A673 (cell line): ENCODE measurements at regions of chr10 and their contacts with region 1.

Region 1: DNA sequence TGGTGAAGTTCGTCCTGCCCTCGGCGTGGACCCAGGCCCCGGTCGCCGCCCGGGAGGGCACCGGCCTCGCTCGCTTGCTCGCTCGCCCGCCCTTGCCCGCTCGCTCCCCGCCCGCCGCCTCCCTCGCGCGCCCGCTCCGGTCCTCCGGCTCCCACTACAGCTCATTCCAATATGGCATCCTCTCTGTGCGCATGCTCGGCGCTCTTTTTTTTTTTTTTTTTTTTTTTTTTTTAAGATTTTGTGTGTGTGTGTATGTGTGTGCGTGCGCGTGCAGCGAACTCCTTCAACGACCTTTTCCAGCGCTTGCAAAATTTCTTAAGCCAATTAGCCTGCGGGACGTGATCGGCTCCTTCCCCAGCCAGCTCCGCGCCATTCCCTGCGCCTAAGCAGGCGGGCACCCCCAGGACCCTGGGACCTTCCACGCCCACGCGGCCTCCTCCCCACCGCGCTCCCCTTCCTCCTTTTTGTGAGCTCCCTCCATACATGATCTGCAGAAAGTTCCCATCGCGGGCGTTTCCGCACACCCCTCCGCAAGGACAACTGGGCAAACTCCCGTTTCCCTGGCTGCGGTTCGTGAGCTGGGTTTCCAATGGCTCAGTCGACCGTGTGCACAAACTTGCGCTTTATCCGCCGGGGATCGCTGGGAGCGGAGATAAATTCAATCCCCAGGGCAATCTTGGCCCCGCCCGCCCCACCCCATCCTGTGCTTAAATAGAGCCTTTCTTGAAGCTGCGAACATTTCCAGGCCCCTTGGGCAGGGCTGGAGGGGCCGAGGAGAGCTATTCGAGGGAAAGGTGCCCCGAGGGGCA is at the start of gene SFMBT2:
- DNase-seq: peak; percentile 77
- H3K4me3 ChIP-seq: peak within 1 kb of the TSS; percentile 64
- H3K27ac ChIP-seq: peak within 1 kb of the TSS; percentile 30
- H3K4me1 ChIP-seq: peaks cover 22% of the 10 kb centered on the region
- H3K27me3 ChIP-seq: peaks cover 88% of the 10 kb centered on the region
- CTCF ChIP-seq: no peak
- total RNA-seq, gene SFMBT2: 8.2 and 11.8 TPM in 2 replicates

Region 2: GRCh38 chr10:6416892-6417512 is 994.1 kb before region 1 on chr10:
- CTCF ChIA-PET with region 1: no interaction called
- POLR2A ChIA-PET with region 1: no interaction called
- intact Hi-C with region 1: loop called (anchors 10 kb)
- DNase-seq: peak; percentile 70
- H3K4me3 ChIP-seq: no peak overlapping the region
- H3K27ac ChIP-seq: no peak overlapping the region
- H3K4me1 ChIP-seq: no peaks in the 10 kb centered on the region
- H3K27me3 ChIP-seq: peaks cover 60% of the 10 kb centered on the region
- CTCF ChIP-seq: peak; percentile 73

Region 3: GRCh38 chr10:6843481-6843881 is 567.6 kb before region 1 on chr10:
- CTCF ChIA-PET with region 1: interaction called, 5 read pairs
- POLR2A ChIA-PET with region 1: no interaction called
- intact Hi-C with region 1: loop called (anchors 10 kb)
- DNase-seq: peak; percentile 28
- H3K4me3 ChIP-seq: no peak overlapping the region
- H3K27ac ChIP-seq: no peak overlapping the region
- H3K4me1 ChIP-seq: peaks cover 8% of the 10 kb centered on the region
- H3K27me3 ChIP-seq: no peaks in the 10 kb centered on the region
- CTCF ChIP-seq: peak; percentile 53

Region 4: DNA sequence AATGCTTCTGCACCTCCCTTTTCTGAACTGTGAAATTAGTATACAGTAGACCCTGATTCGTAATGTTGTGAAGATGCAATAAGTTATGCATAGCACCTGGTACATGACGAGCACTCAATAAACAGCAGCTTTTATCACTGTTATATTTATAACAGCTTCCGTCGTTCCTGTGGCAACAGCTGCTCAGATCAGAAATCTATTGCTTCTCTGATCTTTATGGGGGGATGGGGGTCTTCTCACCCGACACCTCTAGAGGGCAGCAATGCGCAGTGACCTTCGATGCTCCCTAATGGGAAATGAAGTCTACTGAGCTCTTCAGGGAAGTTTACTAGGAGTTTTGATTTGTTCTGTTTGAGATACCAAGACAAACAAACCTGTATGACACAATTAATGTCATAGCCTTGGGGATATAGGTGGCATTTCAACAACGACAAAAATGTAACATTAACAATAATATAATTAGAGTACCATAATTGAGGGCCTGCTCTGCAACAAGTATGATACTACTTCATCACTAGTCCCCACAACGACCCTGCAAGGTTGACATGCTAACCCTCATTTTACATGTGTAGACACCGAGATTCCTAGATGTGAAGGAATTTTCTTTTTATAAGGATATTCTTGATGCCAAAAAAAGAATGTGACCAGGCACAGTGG is 289.8 kb before region 1 on chr10:
- CTCF ChIA-PET with region 1: no interaction called
- POLR2A ChIA-PET with region 1: no interaction called
- intact Hi-C with region 1: loop called (anchors 5 kb)
- DNase-seq: peak; percentile 73
- H3K4me3 ChIP-seq: no peak overlapping the region
- H3K27ac ChIP-seq: no peak overlapping the region
- H3K4me1 ChIP-seq: no peaks in the 10 kb centered on the region
- H3K27me3 ChIP-seq: peaks cover 75% of the 10 kb centered on the region
- CTCF ChIP-seq: peak; percentile 81

Region 5: DNA sequence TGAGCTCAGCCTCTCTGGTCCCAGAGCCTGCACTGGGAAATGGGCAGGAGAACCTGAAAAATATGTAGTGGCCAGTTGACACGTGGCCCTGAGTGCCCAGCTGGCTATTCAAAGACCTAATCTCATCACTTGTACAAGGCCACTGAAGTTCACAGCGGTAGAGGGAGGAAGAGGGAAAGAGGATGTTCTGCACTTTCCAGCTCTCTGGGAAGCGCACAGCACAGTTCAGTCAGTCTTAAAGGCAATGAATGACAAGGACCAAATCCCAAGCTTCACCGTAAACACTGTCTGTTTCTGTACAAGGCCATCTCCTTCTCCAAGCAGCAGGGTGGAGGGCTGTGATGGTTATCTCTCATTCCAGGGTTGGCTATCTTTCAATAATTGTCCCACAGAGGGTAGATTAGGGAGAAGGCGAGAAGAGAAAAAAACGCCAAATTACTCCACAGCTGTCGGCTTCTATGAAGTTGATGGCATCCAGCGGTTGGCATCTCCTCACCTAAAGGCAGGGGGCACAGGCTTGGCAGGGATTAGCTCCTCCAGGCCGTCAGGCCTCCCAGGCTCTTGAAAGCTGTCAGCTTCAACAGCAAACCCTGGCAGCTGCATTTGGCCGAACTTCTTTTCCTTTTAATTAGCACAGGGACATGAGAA is 10.9 kb before region 1 on chr10:
- CTCF ChIA-PET with region 1: no interaction called
- POLR2A ChIA-PET with region 1: interaction called, 13 read pairs
- intact Hi-C with region 1: no loop called
- DNase-seq: no peak
- H3K4me3 ChIP-seq: no peak overlapping the region
- H3K27ac ChIP-seq: no peak overlapping the region
- H3K4me1 ChIP-seq: no peaks in the 10 kb centered on the region
- H3K27me3 ChIP-seq: peaks cover 28% of the 10 kb centered on the region
- CTCF ChIP-seq: no peak